Activated B cell treated with CpG ODN at 0.5 μM for 24 hours (primary cell): ENCODE measurements at regions of chr6 and their contacts with region 1.

Region 1: DNA sequence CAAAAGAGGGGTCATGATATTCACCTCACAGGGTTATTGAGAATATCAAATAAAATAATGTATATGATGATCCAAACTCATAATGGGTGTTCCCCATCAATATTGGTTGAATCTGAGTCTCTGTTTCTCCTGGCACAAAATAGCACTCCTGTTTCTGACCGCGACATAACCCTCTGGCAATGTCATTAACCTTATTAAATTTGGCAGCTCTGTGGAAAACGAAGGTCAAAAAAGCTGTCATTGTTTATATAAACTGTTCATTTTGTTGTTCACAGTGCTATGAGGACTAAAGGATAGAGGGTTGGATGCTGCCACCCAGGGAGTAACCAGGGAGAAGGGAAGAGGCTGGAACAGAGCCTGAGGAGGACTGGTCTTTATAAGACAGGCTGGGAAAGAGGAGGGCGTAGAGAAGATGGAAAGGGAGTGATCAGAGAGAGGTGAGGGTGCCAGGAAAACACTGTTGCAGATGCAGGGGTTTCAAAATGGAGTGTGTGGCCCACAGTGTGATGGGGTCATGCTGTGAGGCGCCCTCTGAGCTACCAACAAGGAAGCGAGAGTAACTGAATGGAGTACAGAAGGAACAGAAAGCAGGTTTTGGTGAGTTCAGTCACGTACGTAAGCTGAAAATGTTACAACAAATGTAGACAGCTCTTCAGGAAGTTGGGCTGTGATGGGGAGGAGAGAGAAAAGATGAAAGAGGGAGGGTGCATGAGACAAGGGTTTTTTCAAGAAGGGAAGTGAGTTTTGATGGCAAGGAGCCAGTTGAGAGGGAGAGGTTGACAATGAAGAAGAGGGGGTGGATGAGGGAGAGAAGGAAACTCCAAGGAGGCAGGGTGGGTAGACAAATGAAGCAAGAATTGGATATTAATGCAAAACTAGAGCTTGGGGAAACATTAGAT is 251.6 kb upstream of the TAB2 start:
- DNase-seq: no peak
- ATAC-seq: peak; percentile 97
- H3K4me3 Mint-ChIP-seq: peak overlapping the region; percentile 8
- H3K27ac Mint-ChIP-seq: peak overlapping the region; percentile 84
- H3K4me1 Mint-ChIP-seq: peaks cover 43% of the 10 kb centered on the region
- H3K27me3 Mint-ChIP-seq: no peaks in the 10 kb centered on the region
- CTCF ChIP-seq: no peak

Region 2: DNA sequence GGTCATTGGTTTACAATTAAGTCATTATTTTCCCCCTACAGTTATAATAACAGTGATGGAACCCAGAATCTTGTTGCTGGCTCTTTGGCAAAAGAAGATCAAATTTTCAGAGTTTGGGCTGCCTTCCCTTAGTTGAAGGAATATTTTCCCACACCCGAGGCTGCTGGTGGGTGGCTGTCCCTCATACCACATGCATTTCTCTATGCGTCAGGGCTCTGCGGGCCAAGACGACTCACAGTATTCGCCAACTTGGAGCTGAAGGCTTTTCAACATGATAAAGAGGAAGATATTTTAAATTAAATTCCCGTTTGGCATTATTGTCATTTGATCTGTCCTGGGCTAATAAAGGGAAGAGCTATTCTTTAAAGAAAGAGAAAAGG is 825.5 kb before region 1 on chr6:
- CTCF ChIA-PET with region 1: no interaction called
- POLR2A ChIA-PET with region 1: no interaction called
- intact Hi-C with region 1: no loop called
- DNase-seq: no peak
- ATAC-seq: no peak
- H3K4me3 Mint-ChIP-seq: no peak overlapping the region
- H3K27ac Mint-ChIP-seq: no peak overlapping the region
- H3K4me1 Mint-ChIP-seq: no peaks in the 10 kb centered on the region
- H3K27me3 Mint-ChIP-seq: peaks cover 11% of the 10 kb centered on the region
- CTCF ChIP-seq: no peak

Region 3: GRCh38 chr6:148790817-148791216 is 275.1 kb before region 1 on chr6:
- CTCF ChIA-PET with region 1: no interaction called
- POLR2A ChIA-PET with region 1: no interaction called
- intact Hi-C with region 1: no loop called
- DNase-seq: no peak
- ATAC-seq: peak; percentile 79
- H3K4me3 Mint-ChIP-seq: no peak overlapping the region
- H3K27ac Mint-ChIP-seq: peak overlapping the region; percentile 5
- H3K4me1 Mint-ChIP-seq: peaks cover 31% of the 10 kb centered on the region
- H3K27me3 Mint-ChIP-seq: no peaks in the 10 kb centered on the region
- CTCF ChIP-seq: no peak

Region 4: GRCh38 chr6:148926478-148926877 is 139.4 kb before region 1 on chr6:
- CTCF ChIA-PET with region 1: no interaction called
- POLR2A ChIA-PET with region 1: no interaction called
- intact Hi-C with region 1: no loop called
- DNase-seq: no peak
- ATAC-seq: no peak
- H3K4me3 Mint-ChIP-seq: no peak overlapping the region
- H3K27ac Mint-ChIP-seq: no peak overlapping the region
- H3K4me1 Mint-ChIP-seq: peaks cover 7% of the 10 kb centered on the region
- H3K27me3 Mint-ChIP-seq: no peaks in the 10 kb centered on the region
- CTCF ChIP-seq: no peak

Region 5: DNA sequence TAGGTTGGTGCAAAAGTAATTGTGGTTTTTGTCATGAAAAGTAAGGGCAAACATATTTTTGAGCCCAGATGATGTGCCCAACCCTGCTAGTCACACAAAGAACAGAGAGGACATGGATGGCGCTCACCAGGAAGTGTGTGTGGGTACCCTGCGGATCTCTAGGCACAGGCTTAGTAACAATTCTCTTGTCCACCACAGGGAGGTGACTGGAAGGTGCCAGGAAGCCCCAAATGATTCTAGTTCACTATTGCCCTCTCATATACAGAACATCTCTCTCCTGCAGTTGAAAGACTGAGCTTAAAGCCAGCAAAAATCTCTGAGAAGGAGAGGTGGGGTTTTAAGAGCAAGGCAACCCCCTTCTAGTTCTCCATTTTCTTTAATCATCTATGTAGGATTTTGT is 20.5 kb before region 1 on chr6:
- CTCF ChIA-PET with region 1: interaction called, 8 read pairs
- POLR2A ChIA-PET with region 1: interaction called, 3 read pairs
- intact Hi-C with region 1: loop called (anchors 1 kb)
- DNase-seq: no peak
- ATAC-seq: peak; percentile 60
- H3K4me3 Mint-ChIP-seq: no peak overlapping the region
- H3K27ac Mint-ChIP-seq: peak overlapping the region; percentile 68
- H3K4me1 Mint-ChIP-seq: peaks cover 45% of the 10 kb centered on the region
- H3K27me3 Mint-ChIP-seq: no peaks in the 10 kb centered on the region
- CTCF ChIP-seq: no peak

Region 6: GRCh38 chr6:149054559-149055194 is 11.2 kb before region 1 on chr6:
- CTCF ChIA-PET with region 1: interaction called, 5 read pairs
- POLR2A ChIA-PET with region 1: interaction called, 10 read pairs
- intact Hi-C with region 1: no loop called
- DNase-seq: no peak
- ATAC-seq: peak; percentile 84
- H3K4me3 Mint-ChIP-seq: peak overlapping the region; percentile 50
- H3K27ac Mint-ChIP-seq: peak overlapping the region; percentile 55
- H3K4me1 Mint-ChIP-seq: peaks cover 39% of the 10 kb centered on the region
- H3K27me3 Mint-ChIP-seq: no peaks in the 10 kb centered on the region
- CTCF ChIP-seq: no peak

Region 7: DNA sequence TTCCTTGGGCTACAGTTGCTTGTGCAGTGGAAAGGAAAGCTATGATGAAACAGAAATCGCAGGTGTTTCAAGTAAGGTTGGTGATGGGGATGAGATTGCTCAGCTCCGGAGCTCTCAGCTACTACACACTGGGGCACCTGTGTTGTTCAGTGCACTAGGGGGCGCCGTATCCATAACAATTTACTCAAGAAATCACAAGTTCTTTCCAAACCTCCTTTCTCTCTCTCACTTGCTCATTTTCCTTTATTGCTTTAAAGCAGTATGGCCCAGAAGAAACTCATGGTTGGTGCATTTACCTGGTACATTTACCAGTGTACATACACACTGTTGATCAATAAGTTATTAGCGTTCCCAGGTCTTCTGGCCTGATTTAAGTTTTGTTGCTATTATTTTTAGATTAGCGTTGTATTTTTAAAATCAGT is 16.4 kb after region 1 on chr6:
- CTCF ChIA-PET with region 1: interaction called, 14 read pairs
- POLR2A ChIA-PET with region 1: interaction called, 3 read pairs
- intact Hi-C with region 1: no loop called
- DNase-seq: peak; percentile 43
- ATAC-seq: peak; percentile 75
- H3K4me3 Mint-ChIP-seq: no peak overlapping the region
- H3K27ac Mint-ChIP-seq: no peak overlapping the region
- H3K4me1 Mint-ChIP-seq: peaks cover 13% of the 10 kb centered on the region
- H3K27me3 Mint-ChIP-seq: no peaks in the 10 kb centered on the region
- CTCF ChIP-seq: peak; percentile 26

Region 8: DNA sequence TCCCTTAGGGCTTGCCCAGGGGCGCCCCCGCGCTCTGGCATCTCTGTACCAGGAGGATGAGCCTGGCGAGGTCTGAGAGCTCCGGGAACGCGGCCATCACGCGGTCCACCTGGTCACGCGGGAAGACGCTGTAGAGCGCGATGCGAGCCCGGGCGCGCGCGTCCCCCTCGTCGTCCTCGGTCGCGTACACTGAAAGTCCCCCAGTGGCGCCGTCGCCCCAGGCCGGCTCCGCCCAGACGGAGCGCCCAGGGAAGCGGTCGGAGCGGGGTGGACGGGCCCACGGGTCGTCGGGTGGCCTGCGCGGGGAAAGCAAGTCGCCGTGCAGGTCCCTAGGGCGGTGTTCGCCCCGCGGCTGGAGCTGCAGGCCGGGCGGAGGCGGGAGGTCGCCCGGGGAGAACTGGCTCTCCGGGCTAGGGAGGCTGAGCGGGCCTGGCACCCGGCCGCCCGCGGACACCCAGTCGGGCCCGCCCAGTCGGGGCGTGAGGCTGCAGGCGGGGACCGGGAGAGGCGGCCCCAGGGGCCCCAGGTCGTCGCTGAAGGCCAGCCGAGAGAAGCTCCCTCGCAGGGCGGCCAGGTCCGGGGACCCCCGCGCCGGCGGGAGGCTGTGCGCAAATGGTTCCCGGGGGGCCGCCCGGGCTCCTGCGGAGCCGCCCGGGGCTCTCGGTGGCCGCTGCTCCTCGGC is 384.9 kb after region 1 on chr6:
- CTCF ChIA-PET with region 1: no interaction called
- POLR2A ChIA-PET with region 1: no interaction called
- intact Hi-C with region 1: no loop called
- DNase-seq: no peak
- ATAC-seq: no peak
- H3K4me3 Mint-ChIP-seq: no peak overlapping the region
- H3K27ac Mint-ChIP-seq: no peak overlapping the region
- H3K4me1 Mint-ChIP-seq: peaks cover 13% of the 10 kb centered on the region
- H3K27me3 Mint-ChIP-seq: no peaks in the 10 kb centered on the region
- CTCF ChIP-seq: no peak